T-cell (primary cell): ENCODE measurements at regions of chr6 and their contacts with region 1.

Region 1: DNA sequence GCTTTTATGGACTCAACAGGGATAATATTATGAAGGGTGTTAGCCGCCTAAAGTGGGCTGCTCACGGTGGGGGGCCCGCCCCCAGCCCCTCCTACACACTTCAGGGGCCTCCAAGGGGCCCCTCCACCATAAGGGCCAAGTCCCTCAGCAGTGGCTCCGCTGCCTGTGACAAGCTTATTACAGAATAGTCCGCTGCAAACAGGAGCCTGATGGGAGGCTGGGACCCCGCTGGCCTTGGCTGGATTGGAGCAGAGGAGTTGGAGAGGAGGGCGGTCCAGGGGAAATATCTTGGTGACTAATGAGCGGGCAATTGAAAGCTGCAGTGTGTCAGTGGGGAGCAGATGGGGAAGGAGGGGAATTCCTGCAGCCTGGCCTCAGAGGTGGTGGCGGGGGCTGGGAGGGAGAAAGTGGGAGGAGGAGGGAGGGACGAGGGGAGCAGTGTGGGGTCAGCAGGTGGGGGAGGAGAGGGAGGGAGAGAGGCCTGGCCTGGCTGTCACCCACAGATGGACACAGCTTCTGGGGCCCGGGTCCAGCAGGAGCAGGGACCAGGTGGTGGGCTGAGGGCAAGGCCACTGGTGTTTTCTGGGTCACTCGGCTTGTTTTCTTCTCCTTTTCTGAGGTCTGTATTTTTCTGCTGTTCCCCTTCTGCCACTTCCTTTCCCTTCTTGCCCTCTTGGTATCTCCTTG is 57.6 kb upstream of the FOXP4 start:
- DNase-seq: no peak
- ATAC-seq: no peak
- H3K4me3 ChIP-seq: no peak overlapping the region
- H3K4me3 Mint-ChIP-seq: no peak overlapping the region
- H3K27ac ChIP-seq: no peak overlapping the region
- H3K27ac Mint-ChIP-seq: no peak overlapping the region
- H3K4me1 ChIP-seq: no peaks in the 10 kb centered on the region
- H3K4me1 Mint-ChIP-seq: no peaks in the 10 kb centered on the region
- H3K27me3 ChIP-seq: peaks cover 0 to 39% of the 10 kb centered on the region in 2 experiments
- H3K27me3 Mint-ChIP-seq: peaks cover 22 to 29% of the 10 kb centered on the region in 2 donors

Region 2: DNA sequence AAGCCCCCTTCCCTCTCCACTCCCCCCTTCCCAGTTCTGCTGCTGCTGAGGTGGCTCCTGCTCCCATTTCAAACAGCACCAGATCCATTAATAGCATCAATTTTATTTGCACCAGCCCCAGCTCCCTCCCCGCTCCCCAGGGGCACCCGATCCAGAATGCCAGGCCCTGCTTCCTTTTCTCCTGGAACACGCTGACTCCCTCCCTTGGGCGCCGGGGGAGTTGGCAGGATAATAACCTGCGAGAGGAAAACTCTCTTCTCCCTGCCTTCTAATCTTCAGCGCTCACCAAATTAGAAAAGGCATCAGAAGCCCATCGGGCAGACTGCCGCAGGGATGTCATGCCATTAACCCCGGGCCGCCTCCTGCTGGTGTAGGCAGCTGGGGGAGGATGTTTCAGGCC is 75.3 kb before region 1 on chr6:
- CTCF ChIA-PET with region 1: no interaction called
- POLR2A ChIA-PET with region 1: no interaction called
- DNase-seq: no peak
- ATAC-seq: no peak
- H3K4me3 ChIP-seq: no peak overlapping the region
- H3K4me3 Mint-ChIP-seq: no peak overlapping the region
- H3K27ac ChIP-seq: no peak overlapping the region
- H3K27ac Mint-ChIP-seq: no peak overlapping the region
- H3K4me1 ChIP-seq: peaks cover 4% of the 10 kb centered on the region in 2 experiments
- H3K4me1 Mint-ChIP-seq: peaks cover 5 to 13% (median 8%) of the 10 kb centered on the region in 3 donors
- H3K27me3 ChIP-seq: peaks cover 0 to 70% of the 10 kb centered on the region in 2 experiments
- H3K27me3 Mint-ChIP-seq: peaks cover 50 to 62% of the 10 kb centered on the region in 2 donors

Region 3: DNA sequence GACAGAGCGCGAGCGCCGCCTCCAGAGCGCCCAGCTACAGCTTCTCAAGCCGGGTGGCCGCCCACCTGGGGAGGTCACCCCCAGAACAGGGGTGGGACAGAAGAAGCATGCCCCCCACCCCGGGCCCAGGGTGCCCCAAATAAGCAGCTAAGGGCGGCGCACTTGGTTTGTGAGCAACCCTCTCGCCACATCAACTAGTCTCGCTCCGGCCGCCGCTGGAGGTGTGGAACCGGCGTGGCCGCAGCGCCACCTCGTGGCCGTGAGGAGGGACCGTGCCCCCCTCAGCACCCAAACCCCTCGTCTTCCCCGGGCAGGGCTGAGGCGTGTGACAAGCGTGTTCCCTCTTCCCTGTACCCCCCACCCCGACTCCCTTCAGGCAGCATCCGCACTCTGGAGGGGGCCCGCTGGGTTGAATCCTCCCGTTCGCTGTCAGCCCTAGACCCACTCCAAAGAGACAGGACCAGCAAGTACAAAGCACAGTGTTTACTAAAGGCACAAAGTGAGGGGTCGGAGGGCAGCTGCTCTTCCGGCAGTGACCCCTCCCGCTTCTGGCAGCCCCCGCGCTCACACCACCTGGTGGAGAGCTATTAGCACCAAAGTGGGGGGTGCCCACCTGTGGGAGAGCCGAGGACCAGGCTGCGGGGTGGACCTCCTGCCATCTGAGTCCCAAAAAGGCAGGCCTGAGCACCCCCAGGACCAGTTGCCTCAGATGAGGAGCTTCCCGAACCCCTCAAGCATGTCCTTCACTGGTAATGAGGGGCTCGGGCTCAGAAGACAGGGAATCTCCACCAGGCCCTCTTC is 195.1 kb after region 1 on chr6:
- CTCF ChIA-PET with region 1: interaction called in 1 of 2 experiments, 11 read pairs
- POLR2A ChIA-PET with region 1: no interaction called
- DNase-seq: peak; percentile 43 to 89 (median 72)
- ATAC-seq: peak; percentile 89 to 93 (median 91)
- H3K4me3 ChIP-seq: peak overlapping the region; percentile 48 to 60
- H3K4me3 Mint-ChIP-seq: peak overlapping the region; percentile 77 to 80 (median 80)
- H3K27ac ChIP-seq: peak overlapping the region; percentile 7
- H3K27ac Mint-ChIP-seq: peak overlapping the region; percentile 72 to 82
- H3K4me1 ChIP-seq: peaks cover 0 to 21% of the 10 kb centered on the region in 2 experiments
- H3K4me1 Mint-ChIP-seq: peaks cover 8 to 18% (median 13%) of the 10 kb centered on the region in 3 donors
- H3K27me3 ChIP-seq: peaks cover 0 to 19% of the 10 kb centered on the region in 2 experiments
- H3K27me3 Mint-ChIP-seq: peaks cover 0 to under 1% of the 10 kb centered on the region in 2 donors